Activated CD8-positive, alpha-beta T cell treated with anti-CD3 and anti-CD28 coated beads for 36 hours (primary cell): ENCODE measurements at regions of chr20 and their contacts with region 1.

Region 1: DNA sequence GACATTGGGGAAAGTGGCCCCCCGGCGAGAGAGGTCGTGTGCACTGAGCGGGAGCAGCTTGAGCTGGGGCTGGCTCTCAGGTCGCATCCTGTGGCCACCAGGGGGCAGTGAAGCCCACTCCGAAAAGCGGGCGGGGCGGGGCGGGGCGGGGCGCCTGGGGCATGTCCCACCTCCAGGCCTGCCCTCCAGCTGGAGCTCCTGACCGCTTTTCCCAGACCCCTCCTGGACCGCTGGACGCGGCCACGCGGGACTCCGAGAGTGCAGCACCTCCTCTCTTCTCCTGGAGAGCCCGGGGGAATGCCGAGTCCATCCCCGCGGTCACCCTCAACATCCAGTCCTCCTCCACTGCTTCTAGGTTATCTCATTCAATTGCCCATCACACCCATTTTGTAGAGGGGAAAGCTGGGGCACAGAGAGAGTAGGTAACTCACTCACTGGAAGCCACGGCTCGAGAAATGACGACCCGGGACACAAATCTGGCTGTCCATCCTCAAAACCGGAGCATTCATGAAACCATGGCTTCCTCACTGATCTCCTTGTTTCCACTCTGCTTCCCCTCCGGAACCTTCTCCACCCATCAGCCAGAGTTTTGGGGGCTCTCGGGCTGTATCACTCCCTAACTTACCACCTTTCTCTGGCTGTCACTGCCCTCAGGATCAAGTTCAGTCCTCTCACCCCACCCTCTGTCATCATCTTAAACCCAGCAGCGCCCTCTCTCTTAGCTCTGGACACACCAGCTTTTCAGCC is 24.1 kb downstream of the COX4I2 start:
- DNase-seq: peak; percentile 86
- ATAC-seq: peak; percentile 75
- H3K4me3 Mint-ChIP-seq: peak overlapping the region; percentile 58
- H3K27ac Mint-ChIP-seq: peak overlapping the region; percentile 83
- H3K4me1 Mint-ChIP-seq: peaks cover 57% of the 10 kb centered on the region
- H3K27me3 Mint-ChIP-seq: no peaks in the 10 kb centered on the region
- CTCF ChIP-seq: peak; percentile 78

Region 2: DNA sequence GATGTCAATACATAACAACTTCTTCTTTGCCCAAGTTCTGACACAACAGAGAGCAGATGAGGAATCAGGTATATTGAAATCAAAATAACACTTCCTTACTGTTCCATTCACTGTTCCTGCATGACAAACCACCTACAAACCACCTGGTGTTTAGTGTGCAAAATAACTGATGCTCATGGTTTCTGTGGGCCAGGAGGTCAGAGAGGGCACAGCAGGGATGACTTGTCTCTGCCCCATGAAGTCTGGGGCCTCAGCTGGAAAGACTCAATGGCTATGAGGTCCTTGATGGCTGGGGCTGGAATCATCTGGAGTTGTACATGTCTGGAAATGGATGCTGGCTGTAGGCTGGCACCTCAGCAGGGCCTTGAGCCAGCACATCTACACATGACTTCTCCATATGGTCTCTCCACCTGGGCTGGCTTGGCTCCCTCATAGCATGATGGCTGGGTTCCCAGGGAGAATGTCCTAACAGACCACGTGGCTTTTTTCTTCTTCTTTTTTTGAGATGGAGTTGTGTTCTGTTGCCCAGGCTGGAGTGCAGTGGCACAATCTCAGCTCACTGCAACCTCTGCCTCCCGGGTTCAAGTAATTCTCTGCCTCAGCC is 31.5 kb before region 1 on chr20:
- CTCF ChIA-PET with region 1: interaction called, 31 read pairs
- POLR2A ChIA-PET with region 1: no interaction called
- intact Hi-C with region 1: no loop called
- DNase-seq: peak; percentile 30
- ATAC-seq: peak; percentile 42
- H3K4me3 Mint-ChIP-seq: no peak overlapping the region
- H3K27ac Mint-ChIP-seq: no peak overlapping the region
- H3K4me1 Mint-ChIP-seq: peaks cover 5% of the 10 kb centered on the region
- H3K27me3 Mint-ChIP-seq: no peaks in the 10 kb centered on the region
- CTCF ChIP-seq: no peak

Region 3: GRCh38 chr20:31674895-31675827 is 13.4 kb after region 1 on chr20:
- CTCF ChIA-PET with region 1: interaction called, 64 read pairs
- POLR2A ChIA-PET with region 1: interaction called, 25 read pairs
- intact Hi-C with region 1: no loop called
- DNase-seq: peak; percentile 76
- ATAC-seq: peak; percentile 63
- H3K4me3 Mint-ChIP-seq: peak overlapping the region; percentile 77
- H3K27ac Mint-ChIP-seq: peak overlapping the region; percentile 97
- H3K4me1 Mint-ChIP-seq: peaks cover 80% of the 10 kb centered on the region
- H3K27me3 Mint-ChIP-seq: no peaks in the 10 kb centered on the region
- CTCF ChIP-seq: no peak

Region 4: DNA sequence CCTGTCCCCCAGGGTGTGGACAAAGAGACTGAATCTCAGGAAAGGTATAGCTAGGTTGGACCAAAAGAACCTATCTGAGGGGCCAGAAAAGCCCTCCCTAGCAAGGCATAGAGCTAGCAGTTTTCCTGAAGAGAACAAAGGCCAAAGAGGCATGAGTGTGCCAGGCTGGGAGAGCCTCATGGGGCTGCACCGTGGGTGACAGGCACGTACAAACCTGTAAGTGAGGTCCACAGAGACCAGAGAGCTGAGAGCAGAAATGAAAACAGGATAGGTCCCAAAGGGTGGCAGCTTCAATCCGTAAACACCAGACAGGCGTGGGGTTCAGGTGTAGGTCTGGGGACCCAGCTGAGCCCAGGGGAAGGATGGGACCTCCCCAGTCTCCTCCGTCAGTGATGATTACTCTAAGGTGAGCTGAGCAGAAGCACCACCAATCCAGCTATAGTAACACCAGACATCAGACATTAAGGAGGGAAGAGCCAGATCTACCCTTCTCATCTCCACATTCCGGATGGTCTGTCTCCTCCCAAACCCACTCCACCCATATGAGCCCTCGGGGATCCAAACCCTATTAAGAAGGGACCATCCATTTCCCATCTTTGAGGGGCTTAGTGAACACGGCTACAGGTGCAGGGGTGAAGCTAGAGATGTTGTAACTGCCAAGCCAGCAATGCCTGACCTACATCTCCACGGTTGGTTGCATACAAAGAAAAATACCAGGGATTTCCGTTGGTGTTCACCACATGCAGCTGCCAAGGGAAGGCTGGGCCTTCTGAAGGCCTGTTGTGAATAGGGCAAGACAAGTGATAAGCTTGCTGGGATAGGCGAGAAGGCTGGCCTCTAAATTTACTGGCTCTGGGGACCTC is 22.6 kb after region 1 on chr20:
- CTCF ChIA-PET with region 1: interaction called, 18 read pairs
- POLR2A ChIA-PET with region 1: interaction called, 6 read pairs
- intact Hi-C with region 1: no loop called
- DNase-seq: peak; percentile 40
- ATAC-seq: peak; percentile 59
- H3K4me3 Mint-ChIP-seq: no peak overlapping the region
- H3K27ac Mint-ChIP-seq: peak overlapping the region; percentile 81
- H3K4me1 Mint-ChIP-seq: peaks cover 79% of the 10 kb centered on the region
- H3K27me3 Mint-ChIP-seq: no peaks in the 10 kb centered on the region
- CTCF ChIP-seq: no peak

Region 5: GRCh38 chr20:31712564-31713311 is 50.9 kb after region 1 on chr20:
- CTCF ChIA-PET with region 1: interaction called, 333 read pairs
- POLR2A ChIA-PET with region 1: interaction called, 17 read pairs
- intact Hi-C with region 1: no loop called
- DNase-seq: no peak
- ATAC-seq: no peak
- H3K4me3 Mint-ChIP-seq: peak overlapping the region; percentile 97
- H3K27ac Mint-ChIP-seq: peak overlapping the region; percentile 97
- H3K4me1 Mint-ChIP-seq: peaks cover 89% of the 10 kb centered on the region
- H3K27me3 Mint-ChIP-seq: no peaks in the 10 kb centered on the region
- CTCF ChIP-seq: no peak